PC-3 (cell line): ENCODE measurements at regions of chr6 and their contacts with region 1.

Region 1: DNA sequence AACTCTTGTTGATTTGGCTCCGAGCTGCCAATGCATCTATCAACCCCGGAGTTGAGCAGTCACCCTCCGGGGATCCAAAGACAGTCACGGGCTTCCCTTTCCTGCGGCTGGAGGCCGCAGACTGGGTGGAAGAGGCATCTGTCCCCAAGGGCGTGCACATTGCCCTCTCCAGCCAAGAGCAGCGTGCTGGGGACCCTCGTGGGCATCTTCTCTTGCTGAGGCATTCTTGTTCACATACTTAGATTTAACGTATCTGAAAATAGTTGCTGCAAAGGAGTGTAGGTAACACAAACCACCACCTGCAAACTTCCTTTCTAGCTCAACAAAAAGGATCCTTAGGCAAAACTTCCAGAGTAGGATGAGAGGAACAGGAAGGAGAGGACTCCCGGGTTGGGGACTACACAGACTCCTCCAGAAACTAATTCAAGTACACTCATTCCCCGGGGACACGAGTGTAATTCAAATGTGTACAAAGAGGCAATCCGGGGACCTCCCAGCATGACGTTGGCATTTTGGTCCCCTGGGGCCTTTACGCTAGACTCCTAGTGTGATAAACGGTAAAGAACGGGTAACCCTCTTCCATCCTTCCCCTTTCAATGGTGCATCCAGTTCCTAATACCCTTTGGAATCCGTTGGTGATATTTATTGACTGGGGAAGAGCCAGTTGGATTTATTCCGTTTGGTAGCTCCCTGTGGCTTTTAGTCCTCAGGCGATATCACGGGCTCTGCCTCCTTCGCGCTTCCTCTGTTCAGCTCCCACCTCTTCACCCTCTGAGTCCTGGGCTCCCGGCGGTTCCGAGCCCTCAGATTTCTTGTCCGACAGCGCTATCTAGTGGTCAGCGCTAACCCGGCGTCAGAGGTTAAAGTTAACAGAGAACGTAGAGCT is 2.7 kb upstream of the COL12A1 start:
- DNase-seq: peak; percentile 85
- ATAC-seq: peak; percentile 39
- H3K4me3 ChIP-seq: peak overlapping the region; percentile 27; the same call in 1 of the 2 replicates
- H3K27ac ChIP-seq: no peak overlapping the region
- H3K4me1 ChIP-seq: peaks cover 19% of the 10 kb centered on the region
- H3K27me3 ChIP-seq: no peaks in the 10 kb centered on the region
- CTCF ChIP-seq: peak; percentile 91

Region 2: GRCh38 chr6:73969971-73970970 is 1238.3 kb before region 1 on chr6:
- CTCF ChIA-PET with region 1: interaction called, 3 read pairs
- POLR2A ChIA-PET with region 1: no interaction called
- intact Hi-C with region 1: loop called (anchors 5 kb)
- DNase-seq: peak; percentile 68
- ATAC-seq: peak; percentile 45
- H3K4me3 ChIP-seq: no peak overlapping the region
- H3K27ac ChIP-seq: no peak overlapping the region
- H3K4me1 ChIP-seq: peaks cover 18% of the 10 kb centered on the region
- H3K27me3 ChIP-seq: no peaks in the 10 kb centered on the region
- CTCF ChIP-seq: peak; percentile 82

Region 3: DNA sequence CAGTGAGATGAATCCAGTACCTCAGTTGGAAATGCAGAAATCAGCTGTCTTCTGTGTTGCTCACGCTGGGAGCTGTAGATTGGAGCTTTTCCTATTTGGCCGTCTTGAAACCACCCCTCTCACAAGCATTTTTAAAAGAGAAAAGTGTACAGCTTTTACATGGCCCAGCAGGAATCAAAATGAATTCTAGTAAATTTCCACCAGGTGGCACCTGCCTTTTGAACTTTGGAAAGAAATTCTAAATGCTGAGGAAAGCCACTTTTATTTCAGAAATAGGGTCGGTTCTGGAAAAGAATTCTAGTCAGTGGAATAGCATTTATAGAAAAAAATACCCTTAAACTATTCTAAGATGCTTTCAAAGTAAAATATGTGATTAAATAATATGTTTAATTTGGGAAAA is 864.7 kb before region 1 on chr6:
- CTCF ChIA-PET with region 1: interaction called, 4 read pairs
- POLR2A ChIA-PET with region 1: no interaction called
- intact Hi-C with region 1: loop called (anchors 2 kb)
- DNase-seq: peak; percentile 47
- ATAC-seq: 0 out of 2 replicates have a peak, but pooled peaks have one; percentile 29
- H3K4me3 ChIP-seq: no peak overlapping the region
- H3K27ac ChIP-seq: no peak overlapping the region
- H3K4me1 ChIP-seq: no peaks in the 10 kb centered on the region
- H3K27me3 ChIP-seq: no peaks in the 10 kb centered on the region
- CTCF ChIP-seq: peak; percentile 59

Region 4: GRCh38 chr6:74606581-74607071 is 601.9 kb before region 1 on chr6:
- CTCF ChIA-PET with region 1: no interaction called
- POLR2A ChIA-PET with region 1: no interaction called
- intact Hi-C with region 1: loop called (anchors 10 kb)
- DNase-seq: peak; percentile 79
- ATAC-seq: peak; percentile 79
- H3K4me3 ChIP-seq: peak overlapping the region; percentile 30; the same call in 1 of the 2 replicates
- H3K27ac ChIP-seq: peak overlapping the region; percentile 73
- H3K4me1 ChIP-seq: peaks cover 57% of the 10 kb centered on the region
- H3K27me3 ChIP-seq: no peaks in the 10 kb centered on the region
- CTCF ChIP-seq: no peak

Region 5: GRCh38 chr6:74939151-74939708 is 269.3 kb before region 1 on chr6:
- CTCF ChIA-PET with region 1: interaction called, 3 read pairs
- POLR2A ChIA-PET with region 1: no interaction called
- intact Hi-C with region 1: loop called (anchors 1 kb)
- DNase-seq: peak; percentile 36
- ATAC-seq: peak; percentile 50; the same call in 1 of the 2 replicates
- H3K4me3 ChIP-seq: no peak overlapping the region
- H3K27ac ChIP-seq: no peak overlapping the region
- H3K4me1 ChIP-seq: peaks cover 7% of the 10 kb centered on the region; the same call in 1 of the 2 replicates
- H3K27me3 ChIP-seq: no peaks in the 10 kb centered on the region
- CTCF ChIP-seq: 0 out of 2 replicates have a peak, but pooled peaks have one; percentile 33